ENCODE measurements at regions of chr6 and their contacts with region 1.

Region 1: GRCh38 chr6:37051138-37052026 is 45.9 kb downstream of the FGD2 start:
- DNase-seq: peak; percentile 87 to 93
- H3K4me3 ChIP-seq: no peak overlapping the region
- H3K27ac ChIP-seq: no peak overlapping the region
- H3K4me1 ChIP-seq: peaks cover 0 to 10% (median 1%) of the 10 kb centered on the region in 4 donors
- H3K27me3 ChIP-seq: peaks cover 0 to 6% of the 10 kb centered on the region in 2 donors
- CTCF ChIP-seq: peak; percentile 90 to 91

Region 2: DNA sequence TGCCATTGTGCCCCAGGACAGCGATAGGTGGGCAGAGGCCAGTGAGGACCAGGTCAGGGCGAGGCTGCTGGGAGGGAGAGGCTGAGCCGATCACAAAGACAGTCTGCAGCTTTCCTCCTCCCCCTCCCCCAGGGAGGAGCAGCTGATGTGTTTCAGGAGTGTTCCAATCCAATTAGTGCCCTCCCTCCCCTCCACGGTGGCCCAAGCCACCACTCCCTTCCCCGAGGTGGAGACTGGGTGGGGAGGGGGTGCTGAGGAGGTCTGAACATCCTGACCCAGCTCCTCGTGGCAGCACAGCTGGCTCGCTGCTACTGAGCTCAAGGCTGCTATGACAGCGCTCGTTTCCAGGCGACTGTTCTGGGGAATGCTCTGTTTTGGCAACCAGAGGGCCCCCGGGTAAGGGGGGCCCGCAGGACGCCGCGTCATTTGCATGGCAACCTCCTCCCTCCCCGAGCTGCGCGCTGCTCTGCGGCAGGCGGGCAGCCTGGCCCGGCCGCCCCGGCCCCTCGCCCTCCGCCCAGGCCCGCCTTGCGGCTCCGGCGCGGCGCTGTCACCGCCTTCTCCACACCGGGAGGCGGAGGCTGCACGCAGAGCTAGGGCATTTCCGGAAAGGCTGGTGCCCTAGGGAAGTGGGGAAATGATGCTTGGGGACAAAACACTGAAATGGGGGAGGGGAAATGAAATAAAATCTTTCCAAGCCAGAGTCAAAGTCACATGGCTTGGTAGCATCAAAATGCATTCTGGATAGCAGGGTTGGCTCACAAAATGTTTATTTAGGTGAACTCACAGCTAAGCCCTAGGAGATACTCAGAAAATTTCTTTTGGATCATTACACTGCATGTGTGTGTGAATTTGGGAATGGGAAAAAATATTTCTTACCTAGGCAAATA is 51.1 kb after region 1 on chr6:
- intact Hi-C with region 1: loop called (anchors 10 kb)
- DNase-seq: peak; percentile 90 to 94
- H3K4me3 ChIP-seq: peak overlapping the region; percentile 45 to 46
- H3K27ac ChIP-seq: peak overlapping the region; percentile 70 to 87
- H3K4me1 ChIP-seq: peaks cover 0 to 27% (median 14%) of the 10 kb centered on the region in 4 donors
- H3K27me3 ChIP-seq: no peaks in the 10 kb centered on the region
- CTCF ChIP-seq: peak in 1 of 2 experiments; percentile 20

Region 3: GRCh38 chr6:37207903-37208456 is 156.6 kb after region 1 on chr6:
- intact Hi-C with region 1: loop called (anchors 10 kb)
- DNase-seq: peak; percentile 84 to 85
- H3K4me3 ChIP-seq: no peak overlapping the region
- H3K27ac ChIP-seq: no peak overlapping the region
- H3K4me1 ChIP-seq: peaks cover 0 to 7% (median 3%) of the 10 kb centered on the region in 4 donors
- H3K27me3 ChIP-seq: no peaks in the 10 kb centered on the region
- CTCF ChIP-seq: peak; percentile 58 to 64

Region 4: DNA sequence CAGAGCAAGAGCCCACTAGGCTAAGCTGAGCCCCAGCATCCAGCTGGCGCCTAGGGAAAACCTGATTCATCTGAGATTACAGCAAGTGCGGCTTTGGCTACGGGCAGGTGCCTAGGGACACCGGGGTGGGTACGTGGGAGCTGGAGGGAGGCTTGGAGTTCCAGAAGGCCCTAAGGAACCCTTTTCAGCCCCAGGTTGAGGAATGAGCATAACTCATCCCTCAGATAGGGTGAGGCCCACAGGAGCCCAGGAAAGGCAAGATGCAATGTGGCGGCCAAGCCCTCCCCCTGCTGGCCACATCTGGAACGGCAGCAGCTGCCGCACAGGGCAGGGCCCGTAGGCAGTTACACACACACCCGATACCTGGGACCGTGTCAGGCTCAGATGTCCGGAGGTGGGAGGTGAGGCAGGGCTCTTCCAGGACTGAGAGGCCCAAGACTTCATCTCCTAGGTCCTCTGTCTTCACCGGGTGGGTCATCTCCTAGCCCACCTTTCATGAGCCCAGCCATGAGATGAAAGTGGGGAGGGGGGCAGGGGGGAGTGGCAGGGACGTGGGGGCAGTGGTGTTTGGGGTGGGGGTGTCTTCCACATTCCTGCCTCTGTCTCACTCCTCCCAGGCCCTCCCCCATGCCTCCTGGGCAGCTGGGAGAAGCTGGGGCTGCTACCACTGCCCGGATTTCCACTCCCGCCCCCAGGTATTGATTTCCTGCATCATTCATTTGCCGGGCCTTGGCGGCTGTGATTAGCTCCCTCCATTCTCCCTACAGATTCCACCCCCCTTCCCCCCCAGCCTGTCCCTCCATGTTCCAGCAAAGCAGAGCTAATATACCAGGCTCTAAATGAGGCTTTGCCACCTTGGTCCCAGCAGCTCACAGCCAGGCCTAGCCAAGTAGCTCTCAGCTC is 640.8 kb after region 1 on chr6:
- intact Hi-C with region 1: loop called (anchors 10 kb)
- DNase-seq: peak; percentile 61 to 77
- H3K4me3 ChIP-seq: no peak overlapping the region
- H3K27ac ChIP-seq: no peak overlapping the region
- H3K4me1 ChIP-seq: peaks cover 0 to 25% (median 17%) of the 10 kb centered on the region in 4 donors
- H3K27me3 ChIP-seq: no peaks in the 10 kb centered on the region
- CTCF ChIP-seq: peak; percentile 91 to 96

Measured in tibial artery (tissue), 4 donors.